ENCODE measurements at regions of chr20 and their contacts with region 1.

Region 1: DNA sequence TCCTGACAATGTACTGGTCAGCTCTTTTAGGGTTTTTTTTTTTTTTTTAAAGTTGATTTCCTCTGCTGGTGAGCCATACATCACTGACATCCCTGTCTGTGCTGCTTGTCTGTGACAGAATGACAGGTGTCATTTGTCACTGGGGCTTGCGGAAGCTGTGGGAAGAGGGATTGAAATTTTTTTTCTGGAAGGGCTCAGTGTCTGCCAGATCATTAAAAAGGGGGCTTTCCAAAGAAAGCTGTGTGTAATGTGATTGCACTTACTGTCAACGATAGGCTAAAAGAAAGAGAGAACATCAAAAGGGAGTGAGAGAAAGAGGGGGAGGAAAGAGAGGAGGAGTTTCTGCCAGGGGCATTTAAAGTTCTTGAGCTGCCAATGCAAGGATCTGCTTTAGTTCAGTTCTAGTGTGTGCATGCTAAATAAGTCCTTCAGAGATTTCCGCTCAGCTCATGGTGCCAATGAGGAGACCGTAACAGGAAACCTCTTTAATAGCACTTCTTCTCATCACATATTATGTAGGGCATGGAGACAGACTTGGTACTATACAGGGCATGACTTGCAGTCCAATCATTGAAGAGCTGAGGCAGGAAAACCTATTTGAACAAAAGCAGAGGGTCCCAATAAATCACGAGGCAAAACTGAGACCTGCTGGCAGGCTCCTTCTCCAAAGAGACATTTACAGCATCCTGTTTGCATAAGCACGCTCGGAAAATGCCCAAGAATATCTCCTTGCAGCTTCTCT is 177.2 kb downstream of the TSHZ2 start:
- DNase-seq: no peak
- H3K4me3 Mint-ChIP-seq: peak overlapping the region; percentile 37
- H3K27ac Mint-ChIP-seq: peak overlapping the region; percentile 73
- H3K4me1 Mint-ChIP-seq: peaks cover 77% of the 10 kb centered on the region
- H3K27me3 Mint-ChIP-seq: no peaks in the 10 kb centered on the region

Region 2: GRCh38 chr20:52402950-52403349 is 746.4 kb before region 1 on chr20:
- CTCF ChIA-PET with region 1: no interaction called
- intact Hi-C with region 1: loop called (anchors 5 kb)
- DNase-seq: no peak
- H3K4me3 Mint-ChIP-seq: no peak overlapping the region
- H3K27ac Mint-ChIP-seq: no peak overlapping the region
- H3K4me1 Mint-ChIP-seq: peaks cover 63% of the 10 kb centered on the region
- H3K27me3 Mint-ChIP-seq: no peaks in the 10 kb centered on the region

Region 3: DNA sequence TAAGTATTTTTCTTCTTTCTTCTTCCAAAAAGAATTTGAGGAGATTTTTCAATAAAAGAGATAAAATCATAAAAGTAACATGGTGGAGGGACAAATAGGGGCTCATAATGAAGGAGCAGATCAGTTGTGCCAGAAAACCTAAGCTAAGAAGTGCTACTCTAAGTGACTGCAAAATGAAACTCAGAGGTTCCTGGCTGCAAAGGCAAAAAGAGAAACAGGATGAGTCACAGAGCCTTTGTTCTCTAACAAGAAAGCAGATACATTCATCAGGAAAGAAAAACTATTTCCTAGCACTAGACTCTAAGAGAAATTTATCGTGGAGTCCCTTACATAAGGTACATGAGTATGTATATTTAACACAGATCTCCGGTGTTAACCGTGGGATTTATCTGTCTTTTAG is 127.4 kb before region 1 on chr20:
- CTCF ChIA-PET with region 1: no interaction called
- intact Hi-C with region 1: loop called (anchors 1 kb)
- DNase-seq: peak; percentile 64
- H3K4me3 Mint-ChIP-seq: peak overlapping the region; percentile 29
- H3K27ac Mint-ChIP-seq: peak overlapping the region; percentile 93
- H3K4me1 Mint-ChIP-seq: peaks cover 85% of the 10 kb centered on the region
- H3K27me3 Mint-ChIP-seq: no peaks in the 10 kb centered on the region

Region 4: GRCh38 chr20:53077373-53078205 is 71.7 kb before region 1 on chr20:
- CTCF ChIA-PET with region 1: interaction called, 4 read pairs
- intact Hi-C with region 1: loop called (anchors 1 kb)
- DNase-seq: peak; percentile 59
- H3K4me3 Mint-ChIP-seq: no peak overlapping the region
- H3K27ac Mint-ChIP-seq: no peak overlapping the region
- H3K4me1 Mint-ChIP-seq: peaks cover 46% of the 10 kb centered on the region
- H3K27me3 Mint-ChIP-seq: no peaks in the 10 kb centered on the region

Measured in activated naive CD4-positive, alpha-beta T cell treated with anti-CD3 and anti-CD28 coated beads for 36 hours (primary cell).